ENCODE measurements at regions of chrX and their contacts with region 1.

Region 1: GRCh38 chrX:14029425-14030173 is at the start of gene GEMIN8:
- DNase-seq: peak; percentile 89 to 93 (median 92)
- H3K4me3 ChIP-seq: peak within 1 kb of the TSS; percentile 54 to 75
- H3K4me3 Mint-ChIP-seq: peak within 1 kb of the TSS; percentile 90 to 98 (median 96)
- H3K27ac ChIP-seq: peak within 1 kb of the TSS; percentile 88
- H3K27ac Mint-ChIP-seq: peak within 1 kb of the TSS; percentile 92 to 99 (median 98)
- H3K4me1 ChIP-seq: peaks cover 49% of the 10 kb centered on the region
- H3K4me1 Mint-ChIP-seq: peaks cover 22 to 50% (median 38%) of the 10 kb centered on the region in 4 donors
- H3K27me3 ChIP-seq: no peaks in the 10 kb centered on the region
- H3K27me3 Mint-ChIP-seq: no peaks in the 10 kb centered on the region
- total RNA-seq, gene GEMIN8: 10.8 to 12.3 TPM

Region 2: DNA sequence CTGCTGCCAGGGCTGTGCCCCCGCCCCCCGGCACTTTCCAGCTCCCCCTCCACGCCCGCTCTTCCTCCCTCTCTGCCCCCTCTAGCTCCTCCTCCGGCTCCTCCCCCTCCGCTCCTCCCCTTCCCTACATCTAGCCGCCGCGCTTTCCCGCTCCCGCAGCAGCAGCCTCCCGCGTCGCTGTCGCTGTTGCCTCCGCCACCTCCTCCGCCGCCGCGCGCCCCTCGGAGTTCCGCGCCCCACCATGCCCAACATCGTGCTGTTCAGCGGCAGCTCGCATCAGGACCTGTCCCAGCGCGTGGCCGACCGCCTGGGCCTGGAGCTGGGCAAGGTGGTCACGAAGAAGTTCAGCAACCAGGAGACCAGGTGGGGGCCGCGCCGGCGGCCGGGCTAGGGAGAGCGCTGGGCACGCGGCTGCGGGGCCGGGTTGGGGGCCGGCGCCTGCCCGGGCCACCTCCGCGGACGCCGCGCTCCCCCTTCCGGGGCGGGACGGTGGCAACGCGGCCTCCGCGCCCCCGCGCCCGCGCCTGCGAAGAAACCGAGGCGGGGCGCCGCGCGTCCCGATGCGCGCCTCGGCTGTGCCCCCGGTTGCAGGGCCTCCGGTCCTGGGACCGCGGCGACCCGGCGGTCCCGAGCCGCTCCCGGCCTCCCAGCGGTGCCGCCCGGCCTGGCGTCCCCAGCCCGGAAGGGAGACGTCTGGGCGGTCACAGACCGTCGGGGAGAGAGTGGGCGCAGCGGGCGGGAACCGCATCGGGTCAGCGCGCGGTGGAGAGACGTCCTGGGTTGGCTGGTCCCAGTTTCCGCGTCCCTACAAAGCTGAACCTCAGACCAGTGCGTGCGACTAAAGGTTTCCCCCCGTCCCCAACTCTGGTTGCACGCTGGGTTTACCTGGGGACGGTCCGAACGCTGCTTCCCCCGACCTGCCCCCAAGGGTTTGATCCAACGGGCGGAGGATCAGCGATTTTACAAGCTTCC is 1238.1 kb before region 1 on chrX and contains the start of gene PRPS2:
- CTCF ChIA-PET with region 1: no interaction called
- POLR2A ChIA-PET with region 1: no interaction called
- intact Hi-C with region 1: loop called (anchors 10 kb)
- DNase-seq: peak; percentile 61 to 74 (median 65)
- H3K4me3 ChIP-seq: peak within 1 kb of the TSS in 1 of 2 donors; percentile 62
- H3K4me3 Mint-ChIP-seq: peak within 1 kb of the TSS; percentile 87 to 91 (median 88)
- H3K27ac ChIP-seq: peak within 1 kb of the TSS; percentile 41
- H3K27ac Mint-ChIP-seq: peak within 1 kb of the TSS; percentile 67 to 90 (median 72)
- H3K4me1 ChIP-seq: peaks cover 22% of the 10 kb centered on the region
- H3K4me1 Mint-ChIP-seq: peaks cover 11 to 34% (median 20%) of the 10 kb centered on the region in 4 donors
- H3K27me3 ChIP-seq: no peaks in the 10 kb centered on the region
- H3K27me3 Mint-ChIP-seq: no peaks in the 10 kb centered on the region
- total RNA-seq, gene PRPS2: 26.5 to 31.5 TPM

Region 3: DNA sequence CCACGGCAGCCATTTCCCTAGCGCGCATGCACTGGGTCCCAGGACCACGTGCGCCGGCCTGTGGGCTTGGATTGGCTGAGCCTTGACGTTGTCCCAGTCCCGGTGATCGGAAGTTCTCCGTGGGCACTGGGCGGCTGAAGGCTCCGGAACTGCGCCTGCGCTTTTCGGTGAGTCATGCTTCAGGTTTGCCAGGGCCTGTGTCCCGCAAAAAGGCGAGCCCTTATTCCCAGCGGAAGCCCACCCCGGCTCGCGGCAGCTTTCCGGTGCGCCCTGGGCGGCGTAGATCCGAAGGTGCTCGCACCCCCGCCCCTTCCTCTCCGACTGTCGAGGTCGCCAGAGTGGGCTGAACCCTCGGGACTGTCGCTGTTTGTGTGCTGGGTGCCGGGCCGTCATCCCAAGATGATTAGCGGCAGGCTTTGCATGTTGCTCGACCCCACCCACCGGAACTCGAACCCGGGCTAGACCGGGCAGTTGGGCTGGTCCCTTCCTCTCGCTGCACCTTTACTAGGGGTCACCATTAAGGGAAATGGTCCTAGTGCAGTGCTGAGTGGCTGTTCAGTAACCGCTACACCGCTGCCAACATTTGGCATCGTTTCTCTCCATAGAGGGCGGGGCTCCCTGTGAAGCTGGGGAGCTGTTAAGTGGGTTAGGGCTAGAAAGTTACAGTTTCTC is 376.4 kb before region 1 on chrX and contains the start of gene TCEANC:
- CTCF ChIA-PET with region 1: interaction called, 3 read pairs
- POLR2A ChIA-PET with region 1: interaction called, 14 read pairs
- intact Hi-C with region 1: loop called (anchors 1 kb)
- DNase-seq: peak; percentile 95 to 97 (median 96)
- H3K4me3 ChIP-seq: peak within 1 kb of the TSS; percentile 47 to 75
- H3K4me3 Mint-ChIP-seq: peak within 1 kb of the TSS; percentile 91 to 97 (median 96)
- H3K27ac ChIP-seq: peak within 1 kb of the TSS; percentile 94
- H3K27ac Mint-ChIP-seq: peak within 1 kb of the TSS; percentile 96 to 99 (median 99)
- H3K4me1 ChIP-seq: peaks cover 22% of the 10 kb centered on the region
- H3K4me1 Mint-ChIP-seq: peaks cover 11 to 33% (median 18%) of the 10 kb centered on the region in 4 donors
- H3K27me3 ChIP-seq: no peaks in the 10 kb centered on the region
- H3K27me3 Mint-ChIP-seq: no peaks in the 10 kb centered on the region
- total RNA-seq, gene TCEANC: 14.6 to 16.3 TPM

Region 4: DNA sequence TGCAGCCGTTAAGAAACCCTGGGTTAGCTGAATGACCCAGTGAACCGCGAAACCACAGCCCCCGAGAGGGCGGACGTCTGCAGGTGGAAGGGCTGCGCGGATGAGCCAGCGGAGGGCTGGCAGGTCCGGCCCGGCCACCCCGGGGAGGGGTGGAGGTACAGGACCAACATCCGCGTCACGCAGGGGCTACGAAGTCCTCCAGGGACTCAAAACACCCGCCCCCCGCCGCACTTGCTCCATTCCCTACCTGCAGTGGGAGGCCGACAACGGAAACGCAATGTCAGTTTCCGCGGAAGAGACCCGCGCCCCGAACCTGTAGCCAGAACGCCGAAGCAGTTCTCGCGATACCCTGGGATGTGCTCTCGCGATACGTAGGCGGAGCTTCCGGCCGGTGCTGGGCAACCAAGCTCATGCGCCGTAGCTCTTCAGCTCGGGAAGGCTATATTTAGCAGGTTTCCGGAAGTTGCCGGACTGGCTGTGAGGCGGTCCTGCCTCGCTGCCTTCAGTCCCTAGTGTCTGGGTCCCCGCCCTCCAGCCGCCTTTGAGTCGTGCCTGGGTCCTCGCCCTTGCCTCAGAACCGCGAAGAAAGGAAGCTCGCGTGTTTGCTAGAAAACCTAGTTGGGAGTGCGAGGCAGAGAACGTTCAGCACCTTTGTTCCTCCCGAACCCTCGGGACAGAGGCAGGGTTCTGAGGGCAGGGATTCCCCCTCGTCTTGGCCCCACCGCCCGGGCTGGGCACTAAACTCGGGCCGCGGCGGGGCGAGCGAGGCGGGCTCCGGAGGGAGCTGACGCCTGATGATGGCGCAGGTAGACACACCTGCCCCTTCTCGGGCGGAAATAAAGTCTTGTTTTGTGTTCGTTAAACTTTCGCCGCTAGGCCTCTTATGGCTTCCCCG is 295.1 kb before region 1 on chrX and contains the starts of genes OFD1 and TRAPPC2:
- CTCF ChIA-PET with region 1: interaction called, 3 read pairs
- POLR2A ChIA-PET with region 1: interaction called, 16 read pairs
- intact Hi-C with region 1: no loop called
- DNase-seq: peak; percentile 91 to 93 (median 93)
- H3K4me3 ChIP-seq: peak within 1 kb of the TSS; percentile 49 to 84
- H3K4me3 Mint-ChIP-seq: peak within 1 kb of the TSS; percentile 91 to 99 (median 98)
- H3K27ac ChIP-seq: peak within 1 kb of the TSS; percentile 93
- H3K27ac Mint-ChIP-seq: peak within 1 kb of the TSS; percentile 96 to 100 (median 99)
- H3K4me1 ChIP-seq: peaks cover 59% of the 10 kb centered on the region
- H3K4me1 Mint-ChIP-seq: peaks cover 35 to 67% (median 51%) of the 10 kb centered on the region in 4 donors
- H3K27me3 ChIP-seq: no peaks in the 10 kb centered on the region
- H3K27me3 Mint-ChIP-seq: no peaks in the 10 kb centered on the region
- total RNA-seq, gene OFD1: 135 TPM
- total RNA-seq, gene TRAPPC2: 36.6 to 39.6 TPM

Region 5: DNA sequence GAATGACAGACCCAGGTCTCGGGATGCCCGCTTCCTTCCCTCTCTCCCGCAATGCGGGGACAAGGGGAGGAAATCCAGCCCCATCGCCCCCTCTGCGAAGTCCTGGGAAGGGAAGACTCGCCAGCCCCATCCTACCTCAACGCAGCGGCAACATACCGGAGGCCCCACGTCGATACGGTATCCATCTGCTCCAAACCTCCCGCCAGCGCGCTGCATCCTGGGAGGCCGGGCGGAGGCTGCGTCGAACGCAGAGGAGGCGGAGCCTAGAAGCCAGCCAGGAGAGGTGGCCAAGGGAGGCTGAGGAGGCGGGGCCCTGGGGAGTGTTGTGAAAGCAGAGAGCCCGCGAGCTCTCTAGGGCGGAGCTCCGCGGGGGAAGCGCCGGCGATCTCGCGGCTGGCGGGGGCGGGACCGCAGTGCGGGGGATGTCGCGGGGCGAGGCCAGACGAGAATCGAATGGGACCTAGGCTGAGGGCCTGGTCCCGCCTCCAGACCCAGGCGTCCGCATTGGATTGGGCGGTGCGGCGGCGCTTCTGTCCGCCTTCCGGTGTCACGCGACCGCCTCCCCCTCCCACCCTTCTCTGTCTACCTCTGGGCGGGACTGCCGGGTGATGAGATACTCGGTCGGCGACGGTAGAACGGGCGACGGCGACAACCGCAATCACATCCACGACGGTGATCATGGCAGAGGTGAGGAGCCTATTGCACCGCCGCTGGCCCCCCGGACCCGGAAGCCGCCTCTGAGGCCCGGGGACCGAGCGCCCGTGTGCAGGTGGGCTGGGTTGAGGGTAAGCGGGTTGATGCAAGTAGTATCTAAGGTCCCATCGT is 843.5 kb after region 1 on chrX and contains the starts of genes FANCB and MOSPD2:
- CTCF ChIA-PET with region 1: no interaction called
- POLR2A ChIA-PET with region 1: no interaction called
- intact Hi-C with region 1: loop called (anchors 5 kb)
- DNase-seq: peak; percentile 89 to 96 (median 96)
- H3K4me3 ChIP-seq: peak within 1 kb of the TSS; percentile 76 to 77
- H3K4me3 Mint-ChIP-seq: peak within 1 kb of the TSS; percentile 83 to 92 (median 88)
- H3K27ac ChIP-seq: peak within 1 kb of the TSS; percentile 78
- H3K27ac Mint-ChIP-seq: peak within 1 kb of the TSS; percentile 79 to 93 (median 91)
- H3K4me1 ChIP-seq: peaks cover 12% of the 10 kb centered on the region
- H3K4me1 Mint-ChIP-seq: peaks cover 4 to 27% (median 9%) of the 10 kb centered on the region in 4 donors
- H3K27me3 ChIP-seq: no peaks in the 10 kb centered on the region
- H3K27me3 Mint-ChIP-seq: no peaks in the 10 kb centered on the region
- total RNA-seq, gene FANCB: 3.0 to 4.8 TPM
- total RNA-seq, gene MOSPD2: 14.0 to 15.2 TPM

Region 6: GRCh38 chrX:15146515-15146914 is 1116.9 kb after region 1 on chrX:
- CTCF ChIA-PET with region 1: no interaction called
- POLR2A ChIA-PET with region 1: no interaction called
- intact Hi-C with region 1: no loop called
- DNase-seq: no peak
- H3K4me3 ChIP-seq: no peak overlapping the region
- H3K4me3 Mint-ChIP-seq: no peak overlapping the region
- H3K27ac ChIP-seq: no peak overlapping the region
- H3K27ac Mint-ChIP-seq: no peak overlapping the region
- H3K4me1 ChIP-seq: peaks cover 20% of the 10 kb centered on the region
- H3K4me1 Mint-ChIP-seq: peaks cover 18 to 30% (median 24%) of the 10 kb centered on the region in 4 donors
- H3K27me3 ChIP-seq: no peaks in the 10 kb centered on the region
- H3K27me3 Mint-ChIP-seq: no peaks in the 10 kb centered on the region